Upper lobe of right lung (tissue), 1 donor: ENCODE measurements at regions of chr20 and their contacts with region 1.

Region 1: GRCh38 chr20:59605165-59606042 is 1.1 kb downstream of the PHACTR3 start:
- DNase-seq: no peak
- ATAC-seq: no peak
- H3K4me3 ChIP-seq: peak overlapping the region; percentile 23
- H3K27ac ChIP-seq: no peak overlapping the region
- H3K4me1 ChIP-seq: no peaks in the 10 kb centered on the region
- H3K27me3 ChIP-seq: peaks cover 73% of the 10 kb centered on the region
- CTCF ChIP-seq: no peak

Region 2: GRCh38 chr20:59537991-59538390 is 67.4 kb before region 1 on chr20:
- intact Hi-C with region 1: no loop called
- DNase-seq: no peak
- ATAC-seq: no peak
- H3K4me3 ChIP-seq: no peak overlapping the region
- H3K27ac ChIP-seq: no peak overlapping the region
- H3K4me1 ChIP-seq: no peaks in the 10 kb centered on the region
- H3K27me3 ChIP-seq: no peaks in the 10 kb centered on the region
- CTCF ChIP-seq: no peak

Region 3: DNA sequence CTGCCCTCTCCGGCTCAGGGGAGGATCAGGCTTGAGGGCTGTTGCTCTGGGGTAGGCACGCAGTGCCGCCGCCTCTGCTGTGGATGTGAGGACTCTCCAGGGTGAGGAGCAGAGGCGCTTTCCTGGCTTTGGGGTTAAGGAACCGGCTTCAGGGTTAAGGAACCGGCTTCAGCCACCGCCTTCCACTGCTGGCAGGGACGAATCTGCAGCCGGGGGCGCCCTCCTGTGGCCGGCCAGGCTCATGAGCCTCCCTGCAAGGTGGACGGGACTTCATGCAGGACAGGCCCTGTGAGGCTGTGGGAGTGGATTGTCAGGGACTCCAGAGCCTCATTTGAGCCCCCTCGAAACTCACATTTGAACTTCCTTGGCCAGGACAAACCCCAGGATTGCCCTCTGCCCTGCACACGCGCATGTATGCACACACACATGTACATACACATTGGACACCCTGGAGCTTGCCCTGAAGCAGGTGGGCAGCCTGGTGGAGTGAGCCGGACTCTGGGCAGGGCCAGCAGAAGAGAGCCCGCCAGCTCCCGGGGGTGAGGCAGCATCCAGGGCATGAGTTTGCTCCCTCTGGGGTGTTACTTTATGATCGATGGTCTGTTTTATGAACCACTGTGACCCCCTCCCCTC is 145.8 kb after region 1 on chr20:
- intact Hi-C with region 1: loop called (anchors 10 kb)
- DNase-seq: peak; percentile 83
- ATAC-seq: peak; percentile 87
- H3K4me3 ChIP-seq: no peak overlapping the region
- H3K27ac ChIP-seq: no peak overlapping the region
- H3K4me1 ChIP-seq: peaks cover 18% of the 10 kb centered on the region
- H3K27me3 ChIP-seq: peaks cover 41% of the 10 kb centered on the region
- CTCF ChIP-seq: peak; percentile 75

Region 4: GRCh38 chr20:59948828-59949720 is 343.7 kb after region 1 on chr20:
- intact Hi-C with region 1: no loop called
- DNase-seq: no peak
- ATAC-seq: peak; percentile 76
- H3K4me3 ChIP-seq: no peak overlapping the region
- H3K27ac ChIP-seq: no peak overlapping the region
- H3K4me1 ChIP-seq: peaks cover 13% of the 10 kb centered on the region
- H3K27me3 ChIP-seq: no peaks in the 10 kb centered on the region
- CTCF ChIP-seq: peak; percentile 66